Activated T-helper 1 cell treated with anti-CD3 and anti-CD28 coated beads, Interleukin-12 subunit alpha, Interleukin-12 subunit beta, Interleukin-2, Interleukin-4 antibody, amounts not matched to agents 30 ng/mL and 10 ng/mL and 1 ng/mL, durations not matched to agents 14 hours and 24 hours and 36 hours (primary cell): ENCODE measurements at regions of chr10 and their contacts with region 1.

Region 1: GRCh38 chr10:102394079-102394800 is 1.3 kb upstream of the NFKB2 start:
- DNase-seq: peak; percentile 99
- H3K4me3 Mint-ChIP-seq: peak overlapping the region; percentile 90
- H3K27ac Mint-ChIP-seq: peak overlapping the region; percentile 97
- H3K4me1 Mint-ChIP-seq: peaks cover 47% of the 10 kb centered on the region
- H3K27me3 Mint-ChIP-seq: no peaks in the 10 kb centered on the region

Region 2: GRCh38 chr10:100600218-100600617 is 1794.0 kb before region 1 on chr10:
- intact Hi-C with region 1: no loop called
- DNase-seq: no peak
- H3K4me3 Mint-ChIP-seq: no peak overlapping the region
- H3K27ac Mint-ChIP-seq: no peak overlapping the region
- H3K4me1 Mint-ChIP-seq: no peaks in the 10 kb centered on the region
- H3K27me3 Mint-ChIP-seq: peaks cover 22% of the 10 kb centered on the region

Region 3: GRCh38 chr10:102040305-102041050 is 353.8 kb before region 1 on chr10:
- intact Hi-C with region 1: no loop called
- DNase-seq: no peak
- H3K4me3 Mint-ChIP-seq: no peak overlapping the region
- H3K27ac Mint-ChIP-seq: no peak overlapping the region
- H3K4me1 Mint-ChIP-seq: peaks cover 6% of the 10 kb centered on the region
- H3K27me3 Mint-ChIP-seq: no peaks in the 10 kb centered on the region

Region 4: DNA sequence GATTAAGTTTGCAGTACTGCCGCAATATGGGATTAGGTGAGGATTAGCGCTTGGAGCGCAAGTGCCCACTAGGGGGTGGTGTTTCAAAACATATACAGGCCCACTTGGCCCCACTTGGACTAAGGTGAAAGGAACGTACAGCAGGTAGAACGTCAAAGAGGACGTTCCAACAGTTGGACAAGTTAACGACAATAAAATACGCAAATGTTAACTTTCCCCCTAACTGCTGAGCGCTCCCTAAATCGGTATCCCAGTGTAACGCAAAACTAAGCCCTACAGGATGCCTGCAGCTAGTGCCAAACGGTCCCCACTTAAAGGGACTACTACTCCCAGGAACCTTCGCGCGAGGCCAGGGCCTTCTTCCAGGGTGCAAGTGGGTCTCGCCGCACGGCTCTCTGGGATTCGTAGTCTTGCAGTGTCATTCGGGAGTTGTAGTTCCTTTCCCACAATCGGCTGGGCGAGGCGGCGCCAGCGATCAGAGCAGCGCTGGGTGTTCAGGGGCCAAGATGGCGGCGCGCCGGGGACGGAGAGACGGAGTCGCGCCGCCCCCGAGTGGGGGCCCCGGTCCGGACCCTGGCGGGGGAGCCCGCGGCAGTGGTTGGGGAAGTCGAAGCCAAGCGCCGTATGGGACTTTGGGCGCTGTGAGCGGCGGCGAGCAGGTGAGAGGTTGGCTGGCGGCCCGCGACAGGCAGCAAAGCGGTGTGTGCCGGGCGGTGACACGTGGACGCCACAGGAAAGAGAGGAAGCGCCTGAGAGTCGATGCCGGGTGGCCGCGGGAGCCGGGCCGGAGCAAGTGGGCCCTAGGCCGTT is 261.5 kb before region 1 on chr10 and contains the start of gene PPRC1:
- intact Hi-C with region 1: loop called (anchors 1 kb)
- DNase-seq: peak; percentile 97
- H3K4me3 Mint-ChIP-seq: peak within 1 kb of the TSS; percentile 95
- H3K27ac Mint-ChIP-seq: peak within 1 kb of the TSS; percentile 94
- H3K4me1 Mint-ChIP-seq: peaks cover 29% of the 10 kb centered on the region
- H3K27me3 Mint-ChIP-seq: no peaks in the 10 kb centered on the region
- total RNA-seq, gene PPRC1: 112 and 115 TPM in 2 replicates

Region 5: DNA sequence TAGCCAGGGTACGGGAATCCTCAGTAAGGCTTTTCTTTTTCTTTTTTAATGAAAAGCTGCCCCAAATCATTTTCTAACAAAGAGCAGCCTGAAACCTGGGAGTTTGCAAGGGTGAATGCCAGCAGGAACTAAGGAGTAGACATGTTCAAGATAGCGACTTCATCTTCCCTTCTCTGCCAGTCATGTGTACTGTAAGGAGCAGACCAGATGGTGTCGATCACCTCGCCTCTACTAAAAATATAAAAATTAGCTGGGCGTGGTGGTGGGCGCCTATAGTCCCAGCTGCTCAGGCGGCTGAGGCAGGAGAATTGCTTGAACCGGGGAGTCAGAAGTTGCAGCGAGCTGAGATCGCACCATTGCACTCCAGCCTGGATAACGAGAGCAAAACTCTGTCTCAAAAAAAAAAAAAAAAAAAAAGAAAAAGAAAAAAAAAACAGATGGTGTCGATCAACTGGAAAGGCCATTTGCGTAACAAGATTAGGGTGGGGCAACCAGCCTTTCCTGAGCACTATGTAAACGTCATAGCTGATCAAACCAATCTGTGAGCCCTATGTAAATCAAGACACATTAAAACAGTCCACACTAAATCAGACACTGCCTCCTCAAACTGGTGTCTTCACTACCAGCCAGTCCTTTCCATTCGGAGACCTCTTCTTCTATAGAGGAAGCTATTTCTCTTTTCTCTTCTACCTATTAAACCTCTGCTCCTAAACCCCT is 208.3 kb before region 1 on chr10:
- intact Hi-C with region 1: no loop called
- DNase-seq: no peak
- H3K4me3 Mint-ChIP-seq: no peak overlapping the region
- H3K27ac Mint-ChIP-seq: no peak overlapping the region
- H3K4me1 Mint-ChIP-seq: peaks cover 18% of the 10 kb centered on the region
- H3K27me3 Mint-ChIP-seq: peaks cover 4% of the 10 kb centered on the region

Region 6: DNA sequence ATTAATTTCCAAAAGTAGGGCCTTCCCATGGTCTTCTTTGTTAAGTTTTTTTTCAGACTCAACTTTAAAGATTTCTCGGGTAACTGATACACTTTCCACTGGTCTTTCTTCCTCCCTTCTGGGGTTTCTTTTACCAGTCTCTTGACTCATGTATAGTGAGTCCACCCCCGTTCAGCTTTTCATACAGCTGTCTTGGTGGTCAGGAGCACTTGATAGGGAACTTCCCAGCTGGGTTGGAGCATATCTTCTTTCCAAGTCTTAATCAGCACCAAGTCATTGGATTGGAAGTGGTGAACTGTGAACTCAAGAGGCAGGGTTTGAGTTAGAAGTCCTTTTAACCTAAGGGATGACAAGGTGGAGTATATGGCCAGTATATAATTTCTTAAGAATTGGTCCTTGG is 197.3 kb before region 1 on chr10:
- intact Hi-C with region 1: loop called (anchors 1 kb)
- DNase-seq: no peak
- H3K4me3 Mint-ChIP-seq: no peak overlapping the region
- H3K27ac Mint-ChIP-seq: peak overlapping the region; percentile 79
- H3K4me1 Mint-ChIP-seq: peaks cover 8% of the 10 kb centered on the region
- H3K27me3 Mint-ChIP-seq: no peaks in the 10 kb centered on the region

Region 7: DNA sequence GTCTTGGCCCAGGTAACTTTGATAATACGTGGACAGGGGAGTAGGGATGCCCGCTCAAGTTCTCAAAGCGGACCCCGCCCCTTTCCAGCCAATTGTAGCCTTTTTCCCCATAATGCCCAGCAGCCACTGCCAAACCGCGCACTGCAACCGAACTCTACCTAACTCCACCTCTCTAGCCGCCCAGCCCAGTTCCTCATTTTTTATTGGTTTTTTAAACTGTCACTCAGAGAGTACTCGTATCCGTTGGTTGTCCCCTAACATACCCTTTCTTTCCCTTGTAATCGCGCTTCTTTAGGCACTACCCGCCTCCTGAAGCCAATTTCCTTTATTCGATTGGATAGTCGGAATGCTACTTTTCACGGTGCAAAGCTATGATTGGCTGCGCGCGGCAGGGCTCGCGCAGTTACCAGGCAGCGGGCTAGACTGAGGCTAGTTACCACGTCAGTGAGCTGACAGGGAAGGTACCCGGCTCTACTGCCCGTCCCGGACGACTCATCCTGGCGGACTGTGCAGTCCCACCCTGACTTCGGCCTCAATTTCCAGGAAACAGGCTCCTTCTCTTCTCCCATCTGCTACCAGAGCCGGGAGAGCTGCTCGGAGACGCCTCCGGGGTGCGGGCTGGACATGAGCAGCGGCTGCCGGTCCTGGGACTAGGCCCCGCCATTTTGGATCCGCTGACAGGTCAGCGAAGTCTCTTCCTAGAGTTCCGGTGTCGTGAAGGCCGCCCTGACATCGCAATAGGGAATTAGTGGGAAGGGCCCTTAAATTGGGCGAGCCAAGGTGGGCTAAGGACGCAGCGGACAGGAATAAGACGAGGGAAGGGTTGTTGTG is 148.9 kb before region 1 on chr10 and contains the start of gene GBF1:
- intact Hi-C with region 1: loop called (anchors 1 kb)
- DNase-seq: peak; percentile 90
- H3K4me3 Mint-ChIP-seq: peak within 1 kb of the TSS; percentile 96
- H3K27ac Mint-ChIP-seq: peak within 1 kb of the TSS; percentile 91
- H3K4me1 Mint-ChIP-seq: peaks cover 38% of the 10 kb centered on the region
- H3K27me3 Mint-ChIP-seq: peaks cover 9% of the 10 kb centered on the region
- total RNA-seq, gene GBF1: 46.7 TPM in 2 replicates

Region 8: GRCh38 chr10:102432162-102432950 is 38.1 kb after region 1 on chr10 and contains the start of gene CUEDC2:
- intact Hi-C with region 1: loop called (anchors 1 kb)
- DNase-seq: peak; percentile 95
- H3K4me3 Mint-ChIP-seq: peak within 1 kb of the TSS; percentile 95
- H3K27ac Mint-ChIP-seq: peak within 1 kb of the TSS; percentile 94
- H3K4me1 Mint-ChIP-seq: peaks cover 55% of the 10 kb centered on the region
- H3K27me3 Mint-ChIP-seq: no peaks in the 10 kb centered on the region
- total RNA-seq, gene CUEDC2: 59.0 and 59.4 TPM in 2 replicates

Region 9: GRCh38 chr10:102583435-102584417 is 189.5 kb after region 1 on chr10:
- intact Hi-C with region 1: loop called (anchors 1 kb)
- DNase-seq: peak; percentile 73
- H3K4me3 Mint-ChIP-seq: no peak overlapping the region
- H3K27ac Mint-ChIP-seq: no peak overlapping the region
- H3K4me1 Mint-ChIP-seq: peaks cover 16% of the 10 kb centered on the region
- H3K27me3 Mint-ChIP-seq: peaks cover 2% of the 10 kb centered on the region

Region 10: GRCh38 chr10:102660888-102661657 is 266.8 kb after region 1 on chr10:
- intact Hi-C with region 1: no loop called
- DNase-seq: peak; percentile 65
- H3K4me3 Mint-ChIP-seq: peak overlapping the region; percentile 62
- H3K27ac Mint-ChIP-seq: peak overlapping the region; percentile 88
- H3K4me1 Mint-ChIP-seq: peaks cover 39% of the 10 kb centered on the region
- H3K27me3 Mint-ChIP-seq: peaks cover 2% of the 10 kb centered on the region